ENCODE measurements at regions of chr3 and their contacts with region 1.

Region 1: GRCh38 chr3:171829841-171830517 is 13.2 kb upstream of the TMEM212 start:
- DNase-seq: peak; percentile 69
- ATAC-seq: peak; percentile 99
- H3K4me3 ChIP-seq: no peak overlapping the region
- H3K27ac ChIP-seq: peak overlapping the region; percentile 20; the same call in 1 of the 2 replicates
- H3K4me1 ChIP-seq: peaks cover 28% of the 10 kb centered on the region
- H3K27me3 ChIP-seq: no peaks in the 10 kb centered on the region
- CTCF ChIP-seq: peak; percentile 95

Region 2: DNA sequence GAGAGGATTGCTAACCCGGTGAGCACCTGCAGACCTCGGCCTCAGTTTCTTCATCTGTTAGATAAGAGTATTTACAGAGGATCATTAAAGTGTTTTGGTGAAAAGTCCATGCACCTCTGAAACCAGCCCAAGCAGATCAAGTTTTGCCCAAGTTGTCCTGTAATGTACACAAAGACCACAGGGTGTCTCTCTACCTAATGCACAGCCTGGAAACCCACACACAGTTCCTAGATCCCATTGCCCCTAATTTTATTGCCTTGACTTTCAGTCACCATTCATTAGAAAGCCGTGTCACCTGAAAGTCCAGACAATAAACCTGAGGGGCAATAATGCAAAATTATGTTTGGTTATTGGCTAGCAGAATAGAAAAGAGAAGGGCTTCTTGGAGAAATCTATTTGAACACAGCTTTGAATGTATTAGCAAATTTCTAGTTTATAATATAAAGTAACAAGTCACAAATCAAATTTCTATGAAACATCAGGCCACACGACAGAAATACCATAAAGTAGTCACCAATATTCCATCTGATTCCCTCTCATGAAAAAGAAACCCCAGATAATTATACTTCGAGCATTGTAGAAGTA is 642.2 kb before region 1 on chr3:
- CTCF ChIA-PET with region 1: no interaction called
- POLR2A ChIA-PET with region 1: no interaction called
- in situ Hi-C with region 1: no loop called
- intact Hi-C with region 1: loop called (anchors 10 kb)
- DNase-seq: no peak
- ATAC-seq: peak; percentile 88
- H3K4me3 ChIP-seq: no peak overlapping the region
- H3K27ac ChIP-seq: no peak overlapping the region
- H3K4me1 ChIP-seq: no peaks in the 10 kb centered on the region
- H3K27me3 ChIP-seq: no peaks in the 10 kb centered on the region; the same call in 1 of the 2 replicates
- CTCF ChIP-seq: peak; percentile 80

Region 3: GRCh38 chr3:171646357-171647133 is 183.4 kb before region 1 on chr3:
- CTCF ChIA-PET with region 1: interaction called, 6 read pairs
- POLR2A ChIA-PET with region 1: no interaction called
- in situ Hi-C with region 1: no loop called
- intact Hi-C with region 1: loop called (anchors 1 kb)
- DNase-seq: peak; percentile 43
- ATAC-seq: peak; percentile 73
- H3K4me3 ChIP-seq: no peak overlapping the region
- H3K27ac ChIP-seq: no peak overlapping the region; the same call in 1 of the 2 replicates
- H3K4me1 ChIP-seq: no peaks in the 10 kb centered on the region
- H3K27me3 ChIP-seq: no peaks in the 10 kb centered on the region
- CTCF ChIP-seq: peak; percentile 75

Region 4: DNA sequence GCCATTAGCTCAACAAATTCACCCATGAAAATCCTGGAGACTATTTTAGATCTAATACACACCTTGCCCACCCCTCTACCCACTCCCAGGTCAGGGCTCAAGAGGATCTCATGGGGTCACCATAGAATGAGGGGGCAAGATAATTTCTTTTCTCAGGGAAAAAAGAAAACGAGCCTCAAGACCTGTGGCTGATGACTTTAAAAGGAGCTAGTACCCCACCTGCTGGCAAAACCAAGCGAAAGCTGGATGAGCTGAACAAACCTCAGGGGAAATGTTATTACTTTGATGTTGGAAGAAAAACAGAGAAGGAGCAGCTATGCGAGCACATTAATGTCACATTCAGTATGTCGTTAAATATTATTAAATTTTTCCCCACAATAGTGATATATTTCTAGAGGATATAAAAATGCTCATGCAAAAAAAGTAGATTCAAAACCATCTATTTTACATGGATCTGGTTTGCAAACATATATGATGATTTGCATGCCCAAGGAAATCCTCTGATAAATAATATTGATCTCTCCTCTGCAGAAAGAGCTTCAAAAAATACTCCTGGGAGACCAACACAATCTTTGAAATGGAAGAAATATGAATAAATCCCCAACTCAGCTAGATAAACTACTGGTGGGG is 57.4 kb before region 1 on chr3:
- CTCF ChIA-PET with region 1: interaction called, 16 read pairs
- POLR2A ChIA-PET with region 1: interaction called, 3 read pairs
- in situ Hi-C with region 1: no loop called
- intact Hi-C with region 1: loop called (anchors 5 kb)
- DNase-seq: no peak
- ATAC-seq: peak; percentile 73
- H3K4me3 ChIP-seq: no peak overlapping the region
- H3K27ac ChIP-seq: peak overlapping the region; percentile 80
- H3K4me1 ChIP-seq: peaks cover 42% of the 10 kb centered on the region
- H3K27me3 ChIP-seq: no peaks in the 10 kb centered on the region
- CTCF ChIP-seq: peak; percentile 87

Region 5: DNA sequence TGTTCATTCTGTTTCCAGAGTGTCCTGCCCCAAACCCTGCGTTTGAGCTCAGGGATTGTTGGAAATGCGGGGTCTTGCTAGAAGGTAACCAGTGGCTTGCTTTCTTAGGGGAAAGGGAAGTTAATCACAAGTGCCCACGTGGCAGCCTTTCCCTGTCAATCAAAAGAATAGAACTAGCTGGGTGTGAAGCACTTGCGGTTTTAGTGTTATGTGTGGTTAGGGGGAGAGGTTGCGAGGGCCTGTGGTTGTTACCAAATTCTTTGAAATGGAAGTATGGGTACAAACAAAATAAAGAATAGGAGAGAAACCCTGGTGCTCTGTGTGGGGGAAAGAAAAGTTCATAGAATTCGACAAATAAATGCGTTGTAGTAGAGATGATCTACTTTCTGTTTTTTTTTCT is 277.0 kb after region 1 on chr3:
- CTCF ChIA-PET with region 1: no interaction called
- POLR2A ChIA-PET with region 1: no interaction called
- in situ Hi-C with region 1: no loop called
- intact Hi-C with region 1: no loop called
- DNase-seq: no peak
- ATAC-seq: no peak
- H3K4me3 ChIP-seq: no peak overlapping the region
- H3K27ac ChIP-seq: peak overlapping the region; percentile 29
- H3K4me1 ChIP-seq: peaks cover 58% of the 10 kb centered on the region
- H3K27me3 ChIP-seq: no peaks in the 10 kb centered on the region
- CTCF ChIP-seq: no peak